Aorta (tissue), 5 donors: ENCODE measurements at regions of chr5 and their contacts with region 1.

Region 1: GRCh38 chr5:149141224-149141956 is at the start of gene ABLIM3:
- DNase-seq: peak; percentile 80 to 90
- ATAC-seq: peak; percentile 93
- H3K4me3 ChIP-seq: peak within 1 kb of the TSS; percentile 50 to 67
- H3K27ac ChIP-seq: peak within 1 kb of the TSS in 1 of 2 donors; percentile 14
- H3K4me1 ChIP-seq: no peaks in the 10 kb centered on the region
- H3K27me3 ChIP-seq: no peaks in the 10 kb centered on the region
- total RNA-seq, gene ABLIM3: 44.4 to 46.0 TPM

Region 2: GRCh38 chr5:147855774-147856069 is 1285.7 kb before region 1 on chr5:
- intact Hi-C with region 1: no loop called
- DNase-seq: no peak
- ATAC-seq: no peak
- H3K4me3 ChIP-seq: no peak overlapping the region
- H3K27ac ChIP-seq: no peak overlapping the region
- H3K4me1 ChIP-seq: no peaks in the 10 kb centered on the region
- H3K27me3 ChIP-seq: no peaks in the 10 kb centered on the region

Region 3: GRCh38 chr5:148922606-148923005 is 218.8 kb before region 1 on chr5:
- intact Hi-C with region 1: no loop called
- DNase-seq: no peak
- ATAC-seq: no peak
- H3K4me3 ChIP-seq: no peak overlapping the region
- H3K27ac ChIP-seq: no peak overlapping the region
- H3K4me1 ChIP-seq: peaks cover 0 to 5% of the 10 kb centered on the region in 2 donors
- H3K27me3 ChIP-seq: no peaks in the 10 kb centered on the region

Region 4: GRCh38 chr5:149228618-149229297 is 87.4 kb after region 1 on chr5:
- intact Hi-C with region 1: loop called (anchors 2 to 5 kb)
- DNase-seq: no peak
- ATAC-seq: peak; percentile 84
- H3K4me3 ChIP-seq: no peak overlapping the region
- H3K27ac ChIP-seq: no peak overlapping the region
- H3K4me1 ChIP-seq: peaks cover 0 to 2% of the 10 kb centered on the region in 2 donors
- H3K27me3 ChIP-seq: no peaks in the 10 kb centered on the region

Region 5: GRCh38 chr5:149268928-149269557 is 127.7 kb after region 1 on chr5:
- intact Hi-C with region 1: loop called in 1 of 2 experiments (anchors 2 kb)
- DNase-seq: no peak
- ATAC-seq: no peak
- H3K4me3 ChIP-seq: no peak overlapping the region
- H3K27ac ChIP-seq: no peak overlapping the region
- H3K4me1 ChIP-seq: no peaks in the 10 kb centered on the region
- H3K27me3 ChIP-seq: no peaks in the 10 kb centered on the region

Region 6: DNA sequence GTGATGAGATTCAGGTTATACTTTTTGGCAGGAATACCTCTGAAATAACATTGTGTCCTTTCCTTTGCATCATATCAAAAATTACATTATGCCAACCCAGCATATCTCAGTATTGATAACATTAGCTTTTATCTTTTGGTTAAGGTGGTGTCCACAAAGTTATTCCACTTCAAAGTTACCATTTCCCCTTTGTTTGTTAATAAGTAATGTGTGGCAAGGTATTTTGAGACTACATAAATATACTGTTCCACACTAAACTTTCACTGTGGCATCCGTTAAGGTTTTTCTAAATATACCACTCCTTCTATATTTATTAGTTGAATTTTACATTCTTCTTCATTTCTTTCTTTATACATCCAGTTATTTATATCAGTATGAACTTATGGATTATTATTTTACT is 425.8 kb after region 1 on chr5:
- intact Hi-C with region 1: loop called in 1 of 2 experiments (anchors 5 kb)
- DNase-seq: no peak
- ATAC-seq: no peak
- H3K4me3 ChIP-seq: no peak overlapping the region
- H3K27ac ChIP-seq: no peak overlapping the region
- H3K4me1 ChIP-seq: no peaks in the 10 kb centered on the region
- H3K27me3 ChIP-seq: no peaks in the 10 kb centered on the region